MCF 10A (cell line): ENCODE measurements at regions of chr13 and their contacts with region 1.

Region 1: GRCh38 chr13:45310341-45311125 is 30.4 kb downstream of the TPT1 start:
- DNase-seq: no peak
- H3K4me3 Mint-ChIP-seq: peak overlapping the region; percentile 6
- H3K27ac Mint-ChIP-seq: no peak overlapping the region
- H3K4me1 Mint-ChIP-seq: peaks cover 10% of the 10 kb centered on the region
- H3K27me3 Mint-ChIP-seq: no peaks in the 10 kb centered on the region
- CTCF ChIP-seq: no peak

Region 2: DNA sequence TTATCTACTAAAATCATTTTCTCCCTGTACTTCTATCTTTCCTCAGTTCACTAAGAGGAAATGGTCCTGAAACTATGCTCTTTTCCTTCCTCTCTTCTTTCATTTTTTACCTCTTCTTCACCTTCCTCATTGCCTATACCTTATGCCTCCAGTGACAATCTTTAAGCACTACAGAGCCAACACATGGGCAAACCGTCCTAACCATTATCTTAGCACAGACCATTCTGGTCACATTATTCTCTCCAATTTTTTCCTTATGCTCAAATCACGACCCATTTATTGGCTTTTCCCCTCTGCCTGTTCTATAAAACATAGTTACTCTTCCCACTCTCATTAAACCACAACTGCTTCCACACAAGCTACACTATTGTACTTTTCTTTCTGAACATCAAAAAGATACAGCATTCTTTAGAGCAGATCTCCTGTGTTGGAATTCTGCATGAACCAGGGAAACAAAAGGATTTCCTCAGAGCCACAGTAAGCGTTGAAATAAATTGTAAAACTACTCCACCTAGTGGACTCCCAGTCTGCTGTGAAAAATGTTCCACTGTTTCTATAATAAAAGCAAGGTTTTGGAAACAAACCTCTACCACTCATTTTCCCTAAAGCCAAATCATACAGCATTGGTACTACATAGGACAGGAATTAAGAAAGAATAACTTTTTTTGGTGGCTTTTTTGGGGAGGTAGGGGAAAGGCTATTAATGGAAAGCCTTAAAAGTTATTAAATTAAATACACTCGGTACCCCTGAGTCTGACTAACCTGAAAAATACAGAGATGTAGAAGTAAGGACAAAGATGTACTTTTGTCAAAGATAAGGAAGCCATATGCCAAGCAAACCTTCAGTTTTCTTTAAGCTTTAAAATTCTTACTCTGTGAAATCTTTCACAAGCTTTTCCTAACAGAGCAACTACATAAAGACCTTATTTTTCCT is 340.7 kb before region 1 on chr13:
- CTCF ChIA-PET with region 1: interaction called, 3 read pairs
- POLR2A ChIA-PET with region 1: no interaction called
- intact Hi-C with region 1: loop called (anchors 1 kb)
- DNase-seq: peak; percentile 66
- H3K4me3 Mint-ChIP-seq: no peak overlapping the region
- H3K27ac Mint-ChIP-seq: no peak overlapping the region
- H3K4me1 Mint-ChIP-seq: peaks cover 15% of the 10 kb centered on the region
- H3K27me3 Mint-ChIP-seq: no peaks in the 10 kb centered on the region
- CTCF ChIP-seq: peak; percentile 70

Region 3: DNA sequence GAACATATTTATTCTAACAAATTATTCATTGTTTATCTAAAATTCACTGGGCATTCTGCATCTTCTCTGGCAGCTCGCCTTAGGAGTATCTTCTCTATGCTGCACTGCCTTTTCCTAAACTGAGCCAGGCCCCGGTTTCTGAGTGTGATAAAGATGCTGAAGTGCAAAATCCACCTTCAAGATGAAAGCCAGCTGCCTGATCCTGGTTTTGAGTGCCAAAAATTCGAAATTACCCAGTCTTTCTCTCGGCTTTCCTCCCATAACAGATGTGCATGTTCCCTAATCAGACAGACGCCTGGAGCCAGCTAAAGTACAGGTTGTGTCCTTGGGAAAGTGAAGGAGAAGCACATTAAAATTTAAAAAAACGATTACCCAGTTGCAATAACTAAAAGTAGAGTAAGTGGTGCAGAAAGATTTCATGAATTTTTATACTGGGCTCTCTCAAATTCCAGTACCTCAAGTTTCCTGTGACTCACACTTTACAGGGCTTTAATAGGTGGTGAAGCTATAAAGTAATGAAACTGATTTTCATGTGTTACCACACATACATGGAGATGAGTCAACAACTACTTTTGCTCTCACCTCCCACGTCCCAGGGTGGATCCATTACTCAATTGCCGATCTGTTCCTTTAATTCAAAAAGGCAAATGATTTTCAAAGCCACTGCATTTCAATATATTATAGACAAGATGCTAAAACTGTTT is 255.2 kb before region 1 on chr13:
- CTCF ChIA-PET with region 1: interaction called, 3 read pairs
- POLR2A ChIA-PET with region 1: interaction called, 10 read pairs
- intact Hi-C with region 1: no loop called
- DNase-seq: peak; percentile 93
- H3K4me3 Mint-ChIP-seq: peak overlapping the region; percentile 66
- H3K27ac Mint-ChIP-seq: peak overlapping the region; percentile 88
- H3K4me1 Mint-ChIP-seq: peaks cover 14% of the 10 kb centered on the region
- H3K27me3 Mint-ChIP-seq: no peaks in the 10 kb centered on the region
- CTCF ChIP-seq: no peak

Region 4: DNA sequence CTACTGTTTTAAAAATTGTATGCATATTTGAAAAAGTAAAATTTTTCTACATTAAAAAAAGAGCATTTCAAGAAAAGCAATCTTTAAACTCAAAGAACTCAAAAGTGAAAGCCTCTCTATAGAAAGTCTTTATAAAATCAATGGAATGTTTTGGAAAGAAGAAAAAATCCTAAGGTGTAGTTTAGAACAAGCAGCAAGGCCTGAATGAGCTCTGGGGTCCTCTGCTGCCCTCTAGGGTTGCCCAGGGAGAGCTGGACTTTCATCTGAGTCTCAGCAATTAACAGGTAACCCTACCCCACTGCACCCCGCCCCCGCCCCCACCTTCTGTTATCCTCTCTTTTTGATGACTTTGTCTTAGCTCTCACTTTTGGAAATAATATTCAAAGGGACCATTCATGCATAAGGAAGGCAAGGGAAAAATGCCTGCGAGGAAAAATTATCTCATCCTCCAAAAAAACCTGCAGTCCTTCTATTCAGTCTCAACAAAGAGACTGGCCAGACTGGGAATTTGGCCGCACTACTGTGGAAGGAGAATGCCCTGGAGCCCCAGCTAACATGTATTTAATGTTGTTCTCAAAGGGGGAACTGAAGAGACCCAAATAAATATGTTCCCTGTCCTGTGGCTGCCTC is 83.5 kb after region 1 on chr13:
- CTCF ChIA-PET with region 1: interaction called, 3 read pairs
- POLR2A ChIA-PET with region 1: no interaction called
- intact Hi-C with region 1: loop called (anchors 1 kb)
- DNase-seq: peak; percentile 74
- H3K4me3 Mint-ChIP-seq: no peak overlapping the region
- H3K27ac Mint-ChIP-seq: no peak overlapping the region
- H3K4me1 Mint-ChIP-seq: no peaks in the 10 kb centered on the region
- H3K27me3 Mint-ChIP-seq: no peaks in the 10 kb centered on the region
- CTCF ChIP-seq: peak; percentile 71